Activated CD4-positive, alpha-beta T cell treated with anti-CD3 and anti-CD28 coated beads, Interleukin-2, amount 10 ng/mL, durations not matched to agents 24 days and 14 days (primary cell): ENCODE measurements at regions of chr7 and their contacts with region 1.

Region 1: GRCh38 chr7:140230861-140231770 is 54.3 kb upstream of the KDM7A start:
- DNase-seq: peak; percentile 86
- H3K4me3 Mint-ChIP-seq: peak overlapping the region; percentile 96
- H3K27ac Mint-ChIP-seq: peak overlapping the region; percentile 98
- H3K4me1 Mint-ChIP-seq: peaks cover 33% of the 10 kb centered on the region
- H3K27me3 Mint-ChIP-seq: no peaks in the 10 kb centered on the region

Region 2: GRCh38 chr7:140209866-140210609 is 21.1 kb before region 1 on chr7:
- intact Hi-C with region 1: loop called (anchors 1 kb)
- DNase-seq: peak; percentile 90
- H3K4me3 Mint-ChIP-seq: peak overlapping the region; percentile 70
- H3K27ac Mint-ChIP-seq: peak overlapping the region; percentile 87
- H3K4me1 Mint-ChIP-seq: peaks cover 74% of the 10 kb centered on the region
- H3K27me3 Mint-ChIP-seq: peaks cover 3% of the 10 kb centered on the region

Region 3: DNA sequence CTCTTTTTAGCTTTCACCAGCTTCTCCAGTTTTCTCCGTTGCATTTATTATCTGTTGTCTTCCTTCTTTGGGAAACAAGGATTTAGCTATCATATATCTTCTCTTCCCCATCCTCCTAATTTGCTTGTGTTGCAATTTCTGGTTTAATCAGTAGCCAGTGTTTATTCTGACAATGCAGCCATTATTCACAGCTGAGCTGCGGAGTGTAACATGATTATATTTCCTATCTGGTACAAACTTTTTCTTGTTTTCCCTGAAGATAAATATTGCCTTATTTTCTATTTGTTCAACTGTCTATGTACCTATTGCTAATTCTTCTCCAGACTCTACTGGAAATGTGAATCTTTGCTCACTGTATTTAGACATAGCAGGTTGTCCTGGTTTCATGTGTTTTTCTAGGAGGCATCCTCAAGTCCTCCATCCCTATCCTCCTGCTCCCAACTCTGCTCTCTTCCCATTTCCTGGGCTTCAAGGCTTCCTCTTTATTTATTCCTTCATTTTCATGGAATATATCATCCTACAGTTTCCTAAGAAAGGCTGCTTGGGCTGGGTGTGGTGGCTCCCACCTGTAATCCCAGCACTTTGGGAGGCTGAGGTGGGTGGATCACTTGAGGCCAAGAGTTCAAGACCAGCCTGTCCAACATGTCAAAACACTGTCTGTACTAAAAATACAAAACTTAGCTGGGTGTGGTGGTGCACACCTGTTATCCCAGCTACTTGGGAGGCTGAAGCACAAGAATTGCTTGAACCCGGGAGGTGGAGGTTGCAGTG is 18.1 kb after region 1 on chr7:
- intact Hi-C with region 1: loop called (anchors 1 kb)
- DNase-seq: no peak
- H3K4me3 Mint-ChIP-seq: no peak overlapping the region
- H3K27ac Mint-ChIP-seq: no peak overlapping the region
- H3K4me1 Mint-ChIP-seq: peaks cover 21% of the 10 kb centered on the region
- H3K27me3 Mint-ChIP-seq: no peaks in the 10 kb centered on the region

Region 4: GRCh38 chr7:140304191-140304799 is 73.2 kb after region 1 on chr7:
- intact Hi-C with region 1: loop called (anchors 5 kb)
- DNase-seq: peak; percentile 83
- H3K4me3 Mint-ChIP-seq: no peak overlapping the region
- H3K27ac Mint-ChIP-seq: peak overlapping the region; percentile 89
- H3K4me1 Mint-ChIP-seq: peaks cover 10% of the 10 kb centered on the region
- H3K27me3 Mint-ChIP-seq: no peaks in the 10 kb centered on the region

Region 5: GRCh38 chr7:140375892-140376730 is 145.0 kb after region 1 on chr7:
- intact Hi-C with region 1: loop called (anchors 1 kb)
- DNase-seq: peak; percentile 84
- H3K4me3 Mint-ChIP-seq: peak overlapping the region; percentile 78
- H3K27ac Mint-ChIP-seq: peak overlapping the region; percentile 99
- H3K4me1 Mint-ChIP-seq: peaks cover 40% of the 10 kb centered on the region
- H3K27me3 Mint-ChIP-seq: no peaks in the 10 kb centered on the region